ENCODE measurements at regions of chr13 and their contacts with region 1.

Region 1: GRCh38 chr13:34201050-34201913 is 383.3 kb downstream of the RFC3 start:
- DNase-seq: peak in 1 of 2 experiments; percentile 39
- H3K4me3 ChIP-seq: no peak overlapping the region
- H3K4me3 Mint-ChIP-seq: no peak overlapping the region
- H3K27ac Mint-ChIP-seq: peak overlapping the region; percentile 53
- H3K4me1 ChIP-seq: peaks cover 11% of the 10 kb centered on the region; the same call in 1 of the 2 replicates
- H3K4me1 Mint-ChIP-seq: peaks cover 12% of the 10 kb centered on the region
- H3K27me3 ChIP-seq: no peaks in the 10 kb centered on the region
- H3K27me3 Mint-ChIP-seq: no peaks in the 10 kb centered on the region
- CTCF ChIP-seq: no peak

Region 2: GRCh38 chr13:34161931-34162543 is 39.2 kb before region 1 on chr13:
- CTCF ChIA-PET with region 1: no interaction called
- POLR2A ChIA-PET with region 1: no interaction called
- intact Hi-C with region 1: loop called (anchors 1 kb)
- DNase-seq: peak in 1 of 2 experiments; percentile 12
- H3K4me3 ChIP-seq: no peak overlapping the region
- H3K4me3 Mint-ChIP-seq: peak overlapping the region; percentile 36
- H3K27ac Mint-ChIP-seq: no peak overlapping the region
- H3K4me1 ChIP-seq: peaks cover 13% of the 10 kb centered on the region
- H3K4me1 Mint-ChIP-seq: peaks cover 13% of the 10 kb centered on the region
- H3K27me3 ChIP-seq: no peaks in the 10 kb centered on the region
- H3K27me3 Mint-ChIP-seq: peaks cover 2% of the 10 kb centered on the region
- CTCF ChIP-seq: no peak